ENCODE measurements at regions of chr20 and their contacts with region 1.

Region 1: DNA sequence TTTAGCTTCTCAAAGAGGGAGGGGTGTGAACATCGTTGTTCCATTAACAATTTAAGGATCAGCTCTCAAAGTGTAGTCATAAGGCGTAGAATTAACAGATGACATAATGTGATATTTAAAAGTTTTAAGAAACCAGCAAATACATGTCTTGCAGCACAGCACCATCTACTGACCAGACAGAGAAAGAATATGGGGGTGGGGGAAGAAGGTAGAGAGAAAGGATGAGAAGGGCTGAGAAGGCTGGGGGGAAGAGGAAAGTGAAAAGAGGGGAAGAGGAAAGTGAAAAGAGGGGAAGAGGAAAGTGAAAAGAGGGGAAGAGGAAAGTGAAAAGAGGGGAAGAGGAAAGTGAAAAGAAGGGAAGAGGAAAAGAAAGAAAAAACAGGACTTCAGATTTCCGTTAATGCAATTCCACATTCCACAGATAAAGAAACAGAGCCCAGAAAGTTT is 80.9 kb downstream of the HAO1 start:
- DNase-seq: peak in 1 of 2 experiments; percentile 61
- ATAC-seq: peak; percentile 76 to 85; a peak in 5 of 6 replicates
- H3K4me3 ChIP-seq: no peak overlapping the region
- H3K27ac ChIP-seq: no peak overlapping the region
- H3K4me1 ChIP-seq: peaks cover 13% of the 10 kb centered on the region; the same call in 2 of the 3 replicates
- CTCF ChIP-seq: peak; percentile 82
- EP300 ChIP-seq: no peak
- POLR2A ChIP-seq: no peak
- RAD21 ChIP-seq: peak; percentile 88 to 90

Region 2: DNA sequence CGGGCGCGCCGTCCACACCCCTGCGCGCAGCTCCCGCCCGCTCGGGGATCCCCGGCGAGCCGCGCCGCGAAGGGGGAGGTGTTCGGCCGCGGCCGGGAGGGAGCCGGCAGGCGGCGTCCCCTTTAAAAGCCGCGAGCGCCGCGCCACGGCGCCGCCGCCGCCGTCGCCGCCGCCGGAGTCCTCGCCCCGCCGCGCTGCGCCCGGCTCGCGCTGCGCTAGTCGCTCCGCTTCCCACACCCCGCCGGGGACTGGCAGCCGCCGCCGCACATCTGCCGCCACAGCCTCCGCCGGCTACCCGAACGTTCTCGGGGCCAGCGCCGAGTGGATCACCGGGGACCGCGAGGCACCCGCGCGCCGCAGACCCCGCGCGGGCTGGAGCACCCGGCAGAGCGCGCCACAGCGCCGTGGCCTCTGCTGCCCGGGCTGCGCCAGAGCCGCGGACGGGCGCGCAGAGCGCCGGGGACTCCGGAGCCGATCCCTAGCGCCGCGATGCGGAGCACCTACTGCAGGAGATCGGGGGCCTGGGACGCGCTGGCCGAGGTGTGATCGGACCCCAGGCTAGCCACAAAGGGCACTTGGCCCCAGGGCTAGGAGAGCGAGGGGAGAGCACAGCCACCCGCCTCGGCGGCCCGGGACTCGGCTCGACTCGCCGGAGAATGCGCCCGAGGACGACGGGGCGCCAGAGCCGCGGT is 1091.7 kb before region 1 on chr20 and contains the start of gene BMP2:
- CTCF ChIA-PET with region 1: interaction called, 10 read pairs
- POLR2A ChIA-PET with region 1: no interaction called
- DNase-seq: peak; percentile 29 to 48
- ATAC-seq: peak; percentile 88 to 89
- H3K4me3 ChIP-seq: peak within 1 kb of the TSS; percentile 67
- H3K27ac ChIP-seq: peak within 1 kb of the TSS; percentile 14 to 82; a peak in 5 of 6 replicates
- H3K4me1 ChIP-seq: 0 out of 3 replicates have a peak, but pooled peaks cover 6% of the 10 kb centered on the region
- CTCF ChIP-seq: peak; percentile 33; the same call in 2 of the 3 replicates
- EP300 ChIP-seq: no peak
- POLR2A ChIP-seq: no peak
- RAD21 ChIP-seq: no peak
- polyA plus RNA-seq, gene BMP2: 0.23 and 0.42 TPM in 2 replicates

Region 3: DNA sequence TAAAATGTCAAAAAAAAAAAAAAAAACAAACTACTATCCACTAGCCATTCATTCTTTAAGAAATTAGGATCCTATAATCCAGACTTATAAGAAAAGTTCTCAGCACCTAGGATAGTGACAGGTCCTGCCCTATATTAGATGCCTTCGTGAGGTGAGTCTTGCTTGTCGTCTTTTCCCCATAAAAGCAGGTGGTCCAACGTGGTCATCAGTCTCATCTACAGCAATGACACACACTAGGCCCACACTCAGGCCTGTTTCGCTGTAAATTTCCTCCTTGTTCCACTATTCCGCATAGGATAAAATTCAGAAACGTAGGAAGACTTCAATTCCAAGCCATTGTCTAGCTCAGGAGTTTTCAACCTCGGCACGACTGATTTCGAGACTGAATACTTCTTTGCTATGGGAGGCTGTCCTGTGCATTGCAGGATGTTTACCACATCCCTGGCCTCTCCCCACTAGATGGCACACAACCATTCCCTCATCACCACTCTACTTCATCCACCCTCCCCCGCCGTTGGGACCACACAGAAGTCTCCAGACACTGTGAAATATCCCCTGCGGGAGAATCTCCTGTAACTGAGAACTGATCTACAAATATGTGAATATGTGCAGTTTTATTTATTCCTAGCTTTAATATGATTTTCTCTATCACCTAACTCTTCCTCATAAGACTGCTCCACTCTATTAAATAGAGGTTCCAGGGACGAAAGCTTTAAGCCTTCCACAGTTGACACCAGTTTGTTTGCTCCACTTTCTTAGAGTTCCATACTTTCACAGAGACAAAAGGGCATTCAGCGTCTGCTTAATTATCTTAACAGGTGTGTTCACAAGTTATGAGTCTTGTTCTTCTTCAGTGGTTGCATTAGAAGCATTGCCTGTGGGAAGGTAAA is 745.6 kb before region 1 on chr20:
- CTCF ChIA-PET with region 1: interaction called, 12 read pairs
- POLR2A ChIA-PET with region 1: no interaction called
- DNase-seq: peak; percentile 19 to 36
- ATAC-seq: peak; percentile 87
- H3K4me3 ChIP-seq: no peak overlapping the region
- H3K27ac ChIP-seq: no peak overlapping the region
- H3K4me1 ChIP-seq: no peaks in the 10 kb centered on the region
- CTCF ChIP-seq: peak; percentile 20; the same call in 1 of the 3 replicates
- EP300 ChIP-seq: no peak
- POLR2A ChIP-seq: no peak
- RAD21 ChIP-seq: peak; percentile 31 to 33; a peak in 3 of 5 replicates

Region 4: GRCh38 chr20:7734216-7734615 is 125.2 kb before region 1 on chr20:
- CTCF ChIA-PET with region 1: interaction called, 11 read pairs
- POLR2A ChIA-PET with region 1: no interaction called
- DNase-seq: no peak
- ATAC-seq: no peak
- H3K4me3 ChIP-seq: no peak overlapping the region
- H3K27ac ChIP-seq: no peak overlapping the region
- H3K4me1 ChIP-seq: no peaks in the 10 kb centered on the region
- CTCF ChIP-seq: no peak
- EP300 ChIP-seq: no peak
- POLR2A ChIP-seq: no peak
- RAD21 ChIP-seq: no peak

Region 5: DNA sequence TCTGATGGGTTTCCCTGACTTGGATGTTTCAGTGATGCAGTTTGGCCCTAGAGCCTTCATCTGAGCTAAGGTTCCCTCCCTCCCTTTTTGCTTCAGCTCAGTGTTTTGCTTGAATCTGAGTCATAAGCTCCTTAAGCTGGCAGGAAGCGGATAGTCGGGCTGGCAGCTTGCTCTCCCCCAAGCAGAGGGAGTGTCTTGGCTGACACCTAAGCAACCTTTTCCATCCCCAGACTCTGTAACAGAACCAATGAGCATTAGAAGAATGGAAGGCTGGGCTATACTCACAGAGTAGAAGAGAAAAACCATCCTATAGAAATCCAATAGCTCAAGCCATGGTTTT is 17.4 kb before region 1 on chr20:
- CTCF ChIA-PET with region 1: interaction called, 20 read pairs
- POLR2A ChIA-PET with region 1: no interaction called
- DNase-seq: peak; percentile 34 to 85
- ATAC-seq: peak; percentile 92 to 93
- H3K4me3 ChIP-seq: no peak overlapping the region
- H3K27ac ChIP-seq: peak overlapping the region; percentile 78
- H3K4me1 ChIP-seq: peaks cover 35% of the 10 kb centered on the region
- CTCF ChIP-seq: no peak
- EP300 ChIP-seq: no peak
- POLR2A ChIP-seq: no peak
- RAD21 ChIP-seq: no peak

Region 6: GRCh38 chr20:7848351-7848750 is 11.0 kb before region 1 on chr20:
- CTCF ChIA-PET with region 1: interaction called, 20 read pairs
- POLR2A ChIA-PET with region 1: no interaction called
- DNase-seq: no peak
- ATAC-seq: no peak
- H3K4me3 ChIP-seq: no peak overlapping the region
- H3K27ac ChIP-seq: no peak overlapping the region
- H3K4me1 ChIP-seq: peaks cover 26% of the 10 kb centered on the region; the same call in 2 of the 3 replicates
- CTCF ChIP-seq: no peak
- EP300 ChIP-seq: no peak
- POLR2A ChIP-seq: no peak
- RAD21 ChIP-seq: no peak